ENCODE measurements at regions of chr11 and their contacts with region 1.

Region 1: DNA sequence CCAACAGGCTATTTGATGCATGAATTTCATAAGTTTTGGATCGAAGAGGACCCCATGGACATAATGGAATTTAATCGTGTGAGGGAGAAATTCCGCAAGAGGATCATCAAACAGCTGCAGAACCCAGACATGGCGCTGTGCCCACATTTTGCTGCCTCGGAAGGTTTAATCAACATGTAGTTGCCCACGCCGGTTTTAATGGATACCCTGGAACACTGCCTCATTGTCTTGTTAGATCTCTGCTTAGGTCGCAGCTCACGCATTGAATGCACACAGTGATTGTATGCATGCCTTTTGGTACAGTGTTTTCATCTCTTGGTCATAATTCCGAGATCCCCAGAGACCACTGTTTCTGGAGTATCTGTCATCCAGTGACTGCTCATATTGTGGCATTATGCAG is 46.8 kb downstream of the SLN start:
- DNase-seq: no peak
- ATAC-seq: no peak
- H3K4me3 Mint-ChIP-seq: no peak overlapping the region
- H3K27ac Mint-ChIP-seq: no peak overlapping the region
- H3K4me1 Mint-ChIP-seq: peaks cover 28% of the 10 kb centered on the region
- H3K27me3 Mint-ChIP-seq: no peaks in the 10 kb centered on the region; the same call in 1 of the 2 replicates
- CTCF ChIP-seq: no peak

Region 2: GRCh38 chr11:107438148-107438547 is 226.9 kb before region 1 on chr11:
- CTCF ChIA-PET with region 1: no interaction called
- POLR2A ChIA-PET with region 1: no interaction called
- DNase-seq: no peak
- ATAC-seq: no peak
- H3K4me3 Mint-ChIP-seq: no peak overlapping the region
- H3K27ac Mint-ChIP-seq: no peak overlapping the region
- H3K4me1 Mint-ChIP-seq: no peaks in the 10 kb centered on the region
- H3K27me3 Mint-ChIP-seq: no peaks in the 10 kb centered on the region
- CTCF ChIP-seq: no peak

Region 3: GRCh38 chr11:107651672-107652071 is 13.3 kb before region 1 on chr11:
- CTCF ChIA-PET with region 1: interaction called, 11 read pairs
- POLR2A ChIA-PET with region 1: no interaction called
- DNase-seq: no peak
- ATAC-seq: peak; percentile 36; the same call in 1 of the 2 replicates
- H3K4me3 Mint-ChIP-seq: no peak overlapping the region
- H3K27ac Mint-ChIP-seq: no peak overlapping the region
- H3K4me1 Mint-ChIP-seq: peaks cover 53% of the 10 kb centered on the region
- H3K27me3 Mint-ChIP-seq: no peaks in the 10 kb centered on the region
- CTCF ChIP-seq: no peak